Activated T-helper 1 cell treated with anti-CD3 and anti-CD28 coated beads, Interleukin-12 subunit alpha, Interleukin-12 subunit beta, Interleukin-2, Interleukin-4 antibody, amounts not matched to agents 30 ng/mL and 10 ng/mL and 1 ng/mL, durations not matched to agents 14 hours and 24 hours and 36 hours (primary cell): ENCODE measurements at regions of chr5 and their contacts with region 1.

Region 1: DNA sequence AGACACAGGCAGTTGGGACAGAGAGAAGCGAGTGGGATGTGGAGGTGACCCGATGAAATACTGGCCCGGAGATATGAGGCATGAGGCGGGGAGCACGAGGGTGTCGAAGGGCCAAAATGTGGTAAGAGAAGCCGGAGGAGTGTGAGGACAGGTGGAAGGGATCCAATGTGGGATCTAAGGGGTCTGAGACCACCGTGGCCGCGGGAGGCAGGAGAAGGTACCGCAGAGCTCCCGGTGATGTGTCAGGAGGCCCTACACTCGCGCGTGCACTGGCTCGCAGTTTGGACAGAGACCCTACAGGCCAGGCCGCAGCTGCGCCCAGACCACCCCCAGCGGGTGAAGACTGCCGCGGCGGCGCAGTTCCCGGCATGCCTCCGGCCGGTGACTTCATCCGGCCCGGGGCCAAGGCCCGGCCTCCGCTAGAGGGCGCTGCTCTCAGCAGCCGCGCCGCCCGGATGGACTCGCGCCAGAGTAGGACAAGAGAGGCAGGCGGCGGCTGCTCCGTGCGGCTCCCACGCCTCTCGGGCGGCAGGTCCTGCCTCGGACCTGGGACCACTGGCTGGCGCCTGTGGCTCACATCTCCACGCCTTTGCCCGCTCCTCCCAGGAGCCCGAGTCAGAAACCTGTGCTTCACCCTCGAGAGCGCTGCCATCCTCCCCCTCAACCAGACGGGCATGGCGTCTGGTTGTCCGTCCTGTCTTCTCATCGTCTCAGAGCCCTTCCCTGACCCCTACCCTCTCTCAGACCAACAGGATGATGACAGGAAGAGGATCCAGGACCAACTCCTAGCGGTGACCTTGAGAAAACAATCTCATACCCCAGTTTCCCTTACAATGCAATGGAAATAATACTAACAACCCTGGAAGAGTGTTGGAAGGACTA is 35.4 kb upstream of the STING1 start:
- DNase-seq: peak; percentile 88
- H3K4me3 Mint-ChIP-seq: peak overlapping the region; percentile 86
- H3K27ac Mint-ChIP-seq: peak overlapping the region; percentile 90
- H3K4me1 Mint-ChIP-seq: peaks cover 36% of the 10 kb centered on the region
- H3K27me3 Mint-ChIP-seq: peaks cover 2% of the 10 kb centered on the region

Region 2: GRCh38 chr5:139341650-139342422 is 176.1 kb before region 1 on chr5 and contains the start of gene PAIP2:
- intact Hi-C with region 1: loop called (anchors 2 kb)
- DNase-seq: peak; percentile 95
- H3K4me3 Mint-ChIP-seq: peak within 1 kb of the TSS; percentile 94
- H3K27ac Mint-ChIP-seq: peak within 1 kb of the TSS; percentile 95
- H3K4me1 Mint-ChIP-seq: peaks cover 46% of the 10 kb centered on the region
- H3K27me3 Mint-ChIP-seq: no peaks in the 10 kb centered on the region
- total RNA-seq, gene PAIP2: 88.4 and 97.3 TPM in 2 replicates

Region 3: GRCh38 chr5:139403787-139404483 is 114.0 kb before region 1 on chr5 and contains the start of gene SPATA24:
- intact Hi-C with region 1: loop called (anchors 1 kb)
- DNase-seq: peak; percentile 98
- H3K4me3 Mint-ChIP-seq: peak within 1 kb of the TSS; percentile 91
- H3K27ac Mint-ChIP-seq: peak within 1 kb of the TSS; percentile 100
- H3K4me1 Mint-ChIP-seq: peaks cover 47% of the 10 kb centered on the region
- H3K27me3 Mint-ChIP-seq: no peaks in the 10 kb centered on the region
- total RNA-seq, gene SPATA24: 4.1 and 5.3 TPM in 2 replicates

Region 4: DNA sequence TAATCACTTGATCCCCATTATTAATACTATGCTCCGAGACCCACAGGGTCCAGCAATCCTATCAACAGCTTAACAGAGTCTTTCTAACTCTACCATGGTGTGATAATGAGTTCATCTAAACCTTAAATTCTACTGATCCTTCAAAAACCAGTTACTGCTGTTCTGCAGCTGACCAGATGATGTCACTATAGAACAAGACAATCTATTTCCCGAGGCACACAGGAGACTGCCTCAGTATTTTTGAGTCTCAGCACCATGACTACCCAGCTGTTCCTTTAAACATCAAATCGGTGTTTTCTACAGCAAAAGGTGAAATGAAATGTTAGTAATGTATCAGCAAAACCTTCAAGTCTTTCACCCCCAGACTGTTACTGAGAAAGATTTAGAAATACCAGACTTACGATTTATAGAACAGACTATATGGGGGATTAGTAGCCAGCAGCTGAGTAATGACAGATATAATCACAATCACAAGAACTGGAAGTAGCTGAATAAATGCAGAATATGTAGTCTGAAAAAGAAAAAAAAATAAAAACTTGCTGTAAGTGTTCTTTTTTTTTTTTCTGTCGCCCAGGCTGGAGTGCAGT is 95.5 kb before region 1 on chr5:
- intact Hi-C with region 1: loop called (anchors 1 kb)
- DNase-seq: peak; percentile 54
- H3K4me3 Mint-ChIP-seq: no peak overlapping the region
- H3K27ac Mint-ChIP-seq: peak overlapping the region; percentile 26
- H3K4me1 Mint-ChIP-seq: peaks cover 22% of the 10 kb centered on the region
- H3K27me3 Mint-ChIP-seq: no peaks in the 10 kb centered on the region

Region 5: GRCh38 chr5:139482050-139482889 is 35.7 kb before region 1 on chr5 and contains the start of gene STING1:
- intact Hi-C with region 1: loop called (anchors 1 kb)
- DNase-seq: peak; percentile 57
- H3K4me3 Mint-ChIP-seq: peak within 1 kb of the TSS; percentile 90
- H3K27ac Mint-ChIP-seq: peak within 1 kb of the TSS; percentile 88
- H3K4me1 Mint-ChIP-seq: peaks cover 45% of the 10 kb centered on the region
- H3K27me3 Mint-ChIP-seq: no peaks in the 10 kb centered on the region
- total RNA-seq, gene STING1: 213 and 226 TPM in 2 replicates

Region 6: DNA sequence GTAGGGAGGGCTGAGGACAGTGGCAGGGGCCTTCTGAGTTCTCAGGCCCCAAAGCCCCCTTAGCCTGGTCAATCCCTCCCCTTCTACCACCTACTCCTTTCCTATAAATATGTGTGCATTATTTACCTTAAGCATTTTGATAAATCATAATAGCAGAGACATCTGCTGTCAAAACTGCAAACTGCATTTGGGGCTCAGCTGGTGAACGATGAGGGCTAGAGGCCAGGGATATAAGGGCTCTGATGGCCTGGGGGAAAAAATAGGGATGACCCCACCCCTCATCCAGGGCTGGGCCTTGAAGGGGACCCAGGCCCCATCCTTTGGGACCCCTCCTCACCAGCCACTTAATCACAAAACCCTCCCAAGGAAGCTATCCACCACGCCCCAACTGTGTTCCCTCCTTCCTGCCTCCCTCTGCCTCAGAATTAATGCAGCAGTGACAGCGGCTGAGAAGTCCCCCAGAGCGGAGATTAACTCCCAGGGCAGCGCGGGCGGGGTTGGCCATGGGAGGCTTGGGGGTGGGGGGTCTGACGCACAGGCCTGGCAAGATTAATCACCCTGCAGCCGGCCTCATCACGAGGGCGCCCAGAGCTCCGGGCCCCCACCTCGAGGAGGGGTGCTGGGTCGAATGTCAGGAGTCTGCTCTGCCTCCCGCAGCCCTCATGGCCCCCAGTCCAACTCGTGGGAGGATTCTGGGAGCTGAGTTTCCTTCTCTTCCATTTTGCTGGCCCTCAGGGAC is 172.3 kb after region 1 on chr5:
- intact Hi-C with region 1: loop called (anchors 2 kb)
- DNase-seq: no peak
- H3K4me3 Mint-ChIP-seq: no peak overlapping the region
- H3K27ac Mint-ChIP-seq: no peak overlapping the region
- H3K4me1 Mint-ChIP-seq: no peaks in the 10 kb centered on the region
- H3K27me3 Mint-ChIP-seq: peaks cover 2% of the 10 kb centered on the region